ENCODE measurements at regions of chr6 and their contacts with region 1.

Region 1: GRCh38 chr6:78324213-78324612 is 543.1 kb upstream of the IRAK1BP1 start:
- DNase-seq: no peak
- ATAC-seq: no peak
- H3K4me3 ChIP-seq: no peak overlapping the region
- H3K27ac ChIP-seq: no peak overlapping the region
- H3K4me1 ChIP-seq: no peaks in the 10 kb centered on the region
- H3K27me3 ChIP-seq: no peaks in the 10 kb centered on the region

Region 2: DNA sequence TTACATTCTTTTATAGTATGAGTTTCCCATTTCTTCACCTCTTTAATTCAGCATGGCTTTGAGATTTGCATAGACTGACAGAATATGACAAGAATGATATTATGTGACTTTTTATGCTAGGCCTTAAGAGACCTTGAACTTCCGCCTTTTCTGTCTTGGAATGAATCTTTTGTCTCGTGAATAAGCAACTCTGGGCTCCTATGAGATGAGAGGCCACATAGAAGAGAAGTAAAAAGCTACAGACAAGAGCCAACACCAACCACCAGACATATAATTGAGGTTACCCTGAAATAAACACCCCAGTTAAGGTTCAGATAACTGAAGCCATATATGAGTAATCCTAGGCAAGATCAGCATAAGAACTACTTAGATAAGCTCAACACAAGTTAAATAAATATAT is 70.6 kb before region 1 on chr6:
- intact Hi-C with region 1: loop called in 2 of 4 experiments (anchors 2 to 5 kb)
- DNase-seq: no peak
- ATAC-seq: no peak
- H3K4me3 ChIP-seq: no peak overlapping the region
- H3K27ac ChIP-seq: no peak overlapping the region
- H3K4me1 ChIP-seq: no peaks in the 10 kb centered on the region
- H3K27me3 ChIP-seq: no peaks in the 10 kb centered on the region

Region 3: GRCh38 chr6:78259935-78260334 is 64.3 kb before region 1 on chr6:
- intact Hi-C with region 1: loop called in 2 of 4 experiments (anchors 2 to 5 kb)
- DNase-seq: no peak
- ATAC-seq: no peak
- H3K4me3 ChIP-seq: no peak overlapping the region
- H3K27ac ChIP-seq: no peak overlapping the region
- H3K4me1 ChIP-seq: no peaks in the 10 kb centered on the region
- H3K27me3 ChIP-seq: no peaks in the 10 kb centered on the region